A549 (cell line): ENCODE measurements at regions of chr1 and their contacts with region 1.

Region 1: GRCh38 chr1:45018599-45019230 is 6.7 kb downstream of the UROD start:
- DNase-seq: peak; percentile 24 to 62
- ATAC-seq: peak; percentile 89 to 96
- H3K4me3 ChIP-seq: no peak overlapping the region
- H3K27ac ChIP-seq: no peak overlapping the region
- H3K4me1 ChIP-seq: no peaks in the 10 kb centered on the region
- CTCF ChIP-seq: peak; percentile 55
- EP300 ChIP-seq: no peak
- POLR2A ChIP-seq: no peak
- RAD21 ChIP-seq: peak; percentile 63 to 68

Region 2: GRCh38 chr1:44932151-44932550 is 86.6 kb before region 1 on chr1:
- CTCF ChIA-PET with region 1: no interaction called
- POLR2A ChIA-PET with region 1: no interaction called
- DNase-seq: no peak
- ATAC-seq: no peak
- H3K4me3 ChIP-seq: no peak overlapping the region
- H3K27ac ChIP-seq: no peak overlapping the region
- H3K4me1 ChIP-seq: no peaks in the 10 kb centered on the region
- CTCF ChIP-seq: no peak
- EP300 ChIP-seq: no peak
- POLR2A ChIP-seq: no peak
- RAD21 ChIP-seq: no peak

Region 3: GRCh38 chr1:45033356-45033755 is 14.6 kb after region 1 on chr1:
- CTCF ChIA-PET with region 1: interaction called, 23 read pairs
- POLR2A ChIA-PET with region 1: no interaction called
- DNase-seq: no peak
- ATAC-seq: no peak
- H3K4me3 ChIP-seq: no peak overlapping the region
- H3K27ac ChIP-seq: no peak overlapping the region
- H3K4me1 ChIP-seq: peaks cover 11% of the 10 kb centered on the region; the same call in 2 of the 3 replicates
- CTCF ChIP-seq: no peak
- EP300 ChIP-seq: no peak
- POLR2A ChIP-seq: no peak
- RAD21 ChIP-seq: no peak